Aorta (tissue), 5 donors: ENCODE measurements at regions of chrX and their contacts with region 1.

Region 1: DNA sequence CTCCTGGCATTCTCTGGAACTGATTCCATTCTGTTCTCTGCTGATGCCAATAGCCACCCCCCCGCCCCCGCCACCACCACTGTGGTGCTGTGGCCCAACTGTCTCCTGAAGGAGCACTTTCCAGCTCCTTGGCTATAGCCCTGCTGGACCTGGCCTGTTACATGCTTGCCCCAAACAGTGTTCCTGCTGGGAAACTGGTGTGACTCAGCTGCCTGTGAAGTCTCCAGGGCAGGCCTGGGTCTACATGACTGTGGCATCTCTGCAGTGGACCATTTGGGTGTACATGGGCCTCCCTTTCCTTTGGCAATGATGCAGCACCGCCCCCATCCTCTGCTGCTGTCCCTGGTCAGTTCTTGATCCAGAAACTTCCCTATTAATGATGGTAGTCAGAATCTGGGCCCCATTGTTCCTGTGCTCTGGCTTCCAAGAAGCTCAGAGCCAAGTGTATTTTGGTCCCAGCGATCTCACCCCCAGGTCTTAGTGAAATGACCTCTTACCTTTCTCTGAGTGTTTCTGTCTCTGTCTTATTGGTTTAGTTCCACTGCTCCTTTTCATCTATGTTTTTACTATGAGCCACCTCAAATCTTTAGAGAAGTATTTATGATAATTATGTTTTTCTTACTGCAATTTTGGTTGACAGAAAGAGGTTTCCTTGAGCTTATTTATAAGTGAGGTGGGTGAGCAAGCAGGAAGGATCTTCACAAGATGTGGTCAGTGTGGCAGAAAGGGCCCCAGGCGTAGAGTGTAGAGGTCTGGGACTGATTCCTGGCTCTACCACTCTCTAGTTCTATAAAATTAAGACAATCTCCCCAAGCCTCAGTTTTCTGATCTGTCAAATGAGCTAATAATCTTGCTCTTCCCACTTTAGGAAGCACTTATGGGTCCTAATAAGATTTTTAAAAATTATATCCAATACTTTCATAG is 210.7 kb upstream of the EOLA2 start:
- DNase-seq: no peak
- ATAC-seq: no peak
- H3K4me3 ChIP-seq: no peak overlapping the region
- H3K27ac ChIP-seq: peak overlapping the region in 1 of 2 donors; percentile 19
- H3K4me1 ChIP-seq: no peaks in the 10 kb centered on the region
- H3K27me3 ChIP-seq: no peaks in the 10 kb centered on the region

Region 2: GRCh38 chrX:149982310-149982709 is 166.7 kb before region 1 on chrX:
- intact Hi-C with region 1: no loop called
- DNase-seq: no peak
- ATAC-seq: no peak
- H3K4me3 ChIP-seq: no peak overlapping the region
- H3K27ac ChIP-seq: no peak overlapping the region
- H3K4me1 ChIP-seq: no peaks in the 10 kb centered on the region
- H3K27me3 ChIP-seq: no peaks in the 10 kb centered on the region

Region 3: DNA sequence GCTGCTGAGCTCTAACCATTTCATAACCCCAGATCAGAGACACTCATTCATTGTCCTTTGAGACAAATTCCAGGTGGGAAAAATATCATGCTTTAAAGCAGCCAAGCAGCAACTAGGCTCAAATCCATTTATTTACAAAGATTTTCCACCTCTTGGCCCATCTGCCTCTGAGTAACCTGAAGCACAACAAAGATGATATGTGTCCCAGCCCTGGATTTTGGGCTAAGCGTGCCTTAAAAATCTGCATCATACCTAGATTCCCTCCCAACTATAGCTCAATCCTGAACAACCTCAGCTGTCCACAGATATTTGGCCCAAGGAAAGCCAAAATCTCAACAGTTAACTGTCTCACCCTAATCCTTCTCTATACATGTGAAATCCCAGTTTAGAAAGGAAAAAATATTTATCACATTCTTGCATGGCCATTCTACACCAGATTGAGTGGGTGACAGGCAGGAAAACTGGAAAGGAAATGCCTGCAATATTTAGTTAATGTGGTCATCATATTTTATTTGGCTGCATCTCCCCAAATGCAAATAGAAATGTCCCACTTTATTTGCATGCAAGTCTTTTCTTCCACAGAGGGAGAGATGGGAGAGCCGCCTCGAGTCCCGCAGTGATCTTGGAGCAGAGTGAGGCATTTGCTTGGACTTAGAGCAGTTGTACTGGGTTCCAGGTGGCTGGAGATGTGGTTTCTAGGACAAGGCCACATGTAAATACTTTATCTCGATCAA is 64.3 kb before region 1 on chrX:
- intact Hi-C with region 1: loop called in 1 of 2 experiments (anchors 2 kb)
- DNase-seq: no peak
- ATAC-seq: peak; percentile 12
- H3K4me3 ChIP-seq: no peak overlapping the region
- H3K27ac ChIP-seq: peak overlapping the region; percentile 38 to 97
- H3K4me1 ChIP-seq: peaks cover 2 to 5% of the 10 kb centered on the region in 2 donors
- H3K27me3 ChIP-seq: no peaks in the 10 kb centered on the region

Region 4: DNA sequence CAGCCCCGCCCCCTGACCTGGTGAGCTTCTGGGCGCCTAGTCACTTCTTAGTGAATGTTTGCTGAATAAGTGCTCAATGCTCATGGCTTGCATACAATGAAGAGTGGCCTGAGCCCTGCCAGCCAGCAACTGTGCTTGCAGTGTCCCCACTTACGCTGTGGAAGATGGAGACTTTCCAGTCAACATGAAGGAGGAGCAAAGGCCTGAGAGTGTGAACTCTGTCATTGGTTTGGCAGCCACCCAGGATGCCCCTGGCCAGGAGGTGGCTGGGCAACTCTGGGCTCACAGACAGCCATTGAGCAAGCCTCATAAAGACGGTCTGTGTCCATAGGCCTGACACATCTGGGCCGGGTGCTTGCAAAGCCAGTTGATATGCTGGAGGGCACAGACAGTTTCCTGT is 142.0 kb after region 1 on chrX:
- intact Hi-C with region 1: no loop called
- DNase-seq: no peak
- ATAC-seq: peak; percentile 29
- H3K4me3 ChIP-seq: no peak overlapping the region
- H3K27ac ChIP-seq: no peak overlapping the region
- H3K4me1 ChIP-seq: no peaks in the 10 kb centered on the region
- H3K27me3 ChIP-seq: no peaks in the 10 kb centered on the region